Activated CD4-positive, alpha-beta T cell treated with anti-CD3 and anti-CD28 coated beads, Interleukin-2, amount 10 ng/mL, durations not matched to agents 24 days and 14 days (primary cell): ENCODE measurements at regions of chr12 and their contacts with region 1.

Region 1: GRCh38 chr12:68538726-68539614 is 71.7 kb upstream of the RAP1B start:
- DNase-seq: peak; percentile 90
- H3K4me3 Mint-ChIP-seq: peak overlapping the region; percentile 57
- H3K27ac Mint-ChIP-seq: peak overlapping the region; percentile 40
- H3K4me1 Mint-ChIP-seq: peaks cover 35% of the 10 kb centered on the region
- H3K27me3 Mint-ChIP-seq: no peaks in the 10 kb centered on the region

Region 2: GRCh38 chr12:68374307-68374982 is 164.5 kb before region 1 on chr12:
- intact Hi-C with region 1: loop called (anchors 5 kb)
- DNase-seq: peak; percentile 87
- H3K4me3 Mint-ChIP-seq: peak overlapping the region; percentile 68
- H3K27ac Mint-ChIP-seq: peak overlapping the region; percentile 90
- H3K4me1 Mint-ChIP-seq: peaks cover 41% of the 10 kb centered on the region
- H3K27me3 Mint-ChIP-seq: no peaks in the 10 kb centered on the region